ENCODE measurements at regions of chr1 and their contacts with region 1.

Region 1: DNA sequence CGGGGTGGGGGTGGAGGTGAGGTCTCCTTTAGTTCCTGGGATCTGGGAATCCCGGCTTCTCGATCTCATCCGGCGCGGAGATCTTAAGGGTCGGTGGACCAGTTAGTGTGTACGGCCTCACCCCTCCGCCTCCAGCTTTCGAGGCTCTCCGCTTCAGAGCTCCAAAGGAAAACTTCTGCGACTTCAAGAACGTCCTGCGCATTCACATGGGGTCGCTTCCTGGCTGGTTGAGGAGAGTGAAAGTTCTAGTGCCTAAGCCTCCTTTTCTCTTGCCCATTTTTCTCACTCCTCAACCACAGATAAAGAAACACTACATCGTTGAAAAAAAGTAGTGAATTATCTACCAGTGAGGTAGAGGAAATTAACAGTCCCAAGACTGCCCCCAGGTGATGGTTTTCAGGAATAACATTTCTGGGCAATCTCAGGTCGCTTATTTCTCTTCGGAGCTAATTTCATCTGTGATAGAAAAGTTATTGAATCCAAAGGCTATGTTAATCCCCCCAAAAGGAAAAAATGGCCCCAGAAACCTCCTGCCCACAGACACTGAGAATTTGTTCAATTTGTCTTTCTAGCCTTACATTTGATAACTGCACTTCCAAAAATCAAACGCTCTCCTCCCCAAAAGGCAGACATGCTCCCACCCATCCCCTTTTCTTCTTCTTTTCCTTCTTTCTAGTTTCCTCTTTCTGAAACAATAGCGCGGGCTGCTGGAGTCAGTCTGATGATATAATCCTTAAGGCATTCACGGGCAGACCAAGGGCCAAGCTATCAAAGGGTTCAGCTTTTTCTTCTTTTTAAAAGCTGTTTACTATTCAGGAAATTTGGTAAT is 20.6 kb upstream of the TBX15 start:
- DNase-seq: no peak
- ATAC-seq: peak; percentile 26
- H3K4me3 Mint-ChIP-seq: peak overlapping the region; percentile 13
- H3K27ac Mint-ChIP-seq: no peak overlapping the region
- H3K4me1 Mint-ChIP-seq: peaks cover 12% of the 10 kb centered on the region
- H3K27me3 Mint-ChIP-seq: peaks cover 70% of the 10 kb centered on the region

Region 2: DNA sequence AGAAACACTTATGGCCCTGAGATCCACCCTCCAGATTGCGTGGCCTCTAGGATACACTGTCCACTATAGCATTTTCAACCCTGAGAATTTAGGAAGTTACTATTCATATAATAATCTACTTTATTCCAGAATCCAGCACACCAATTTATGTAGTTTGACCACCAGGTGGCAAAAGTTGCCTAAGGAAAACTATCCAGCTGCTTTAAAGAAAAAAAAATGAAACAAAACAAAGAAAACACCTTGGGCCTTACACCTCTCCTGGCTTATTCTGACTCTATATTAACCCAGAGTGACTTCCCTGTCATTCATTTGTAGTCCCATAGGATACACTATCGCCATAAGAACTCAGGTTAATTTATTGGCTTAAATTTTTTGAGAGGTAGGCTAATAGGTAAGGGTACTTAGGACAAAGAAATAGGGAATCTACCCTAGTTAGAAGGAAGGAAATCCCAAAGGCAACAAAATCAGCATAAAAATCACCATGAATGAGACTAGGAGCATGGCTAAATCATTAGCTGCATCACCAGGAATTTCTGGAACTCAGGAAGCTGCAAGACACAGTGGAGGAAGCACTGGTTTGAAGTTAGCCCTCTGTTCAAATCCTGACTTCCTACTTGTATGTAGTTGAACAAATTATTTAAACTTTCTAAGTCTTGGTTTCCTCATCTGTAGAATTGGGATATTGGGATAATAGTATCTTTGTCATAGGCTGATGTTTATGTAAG is 931.2 kb before region 1 on chr1:
- CTCF ChIA-PET with region 1: no interaction called
- POLR2A ChIA-PET with region 1: no interaction called
- intact Hi-C with region 1: loop called in 1 of 2 experiments (anchors 2 kb)
- DNase-seq: no peak
- ATAC-seq: no peak
- H3K4me3 Mint-ChIP-seq: no peak overlapping the region
- H3K27ac Mint-ChIP-seq: no peak overlapping the region
- H3K4me1 Mint-ChIP-seq: peaks cover 4% of the 10 kb centered on the region
- H3K27me3 Mint-ChIP-seq: peaks cover 7% of the 10 kb centered on the region

Region 3: GRCh38 chr1:118151312-118151937 is 857.3 kb before region 1 on chr1:
- CTCF ChIA-PET with region 1: interaction called, 9 read pairs
- POLR2A ChIA-PET with region 1: no interaction called
- intact Hi-C with region 1: loop called (anchors 1 to 10 kb)
- DNase-seq: peak; percentile 68
- ATAC-seq: no peak
- H3K4me3 Mint-ChIP-seq: no peak overlapping the region
- H3K27ac Mint-ChIP-seq: no peak overlapping the region
- H3K4me1 Mint-ChIP-seq: no peaks in the 10 kb centered on the region
- H3K27me3 Mint-ChIP-seq: no peaks in the 10 kb centered on the region

Region 4: DNA sequence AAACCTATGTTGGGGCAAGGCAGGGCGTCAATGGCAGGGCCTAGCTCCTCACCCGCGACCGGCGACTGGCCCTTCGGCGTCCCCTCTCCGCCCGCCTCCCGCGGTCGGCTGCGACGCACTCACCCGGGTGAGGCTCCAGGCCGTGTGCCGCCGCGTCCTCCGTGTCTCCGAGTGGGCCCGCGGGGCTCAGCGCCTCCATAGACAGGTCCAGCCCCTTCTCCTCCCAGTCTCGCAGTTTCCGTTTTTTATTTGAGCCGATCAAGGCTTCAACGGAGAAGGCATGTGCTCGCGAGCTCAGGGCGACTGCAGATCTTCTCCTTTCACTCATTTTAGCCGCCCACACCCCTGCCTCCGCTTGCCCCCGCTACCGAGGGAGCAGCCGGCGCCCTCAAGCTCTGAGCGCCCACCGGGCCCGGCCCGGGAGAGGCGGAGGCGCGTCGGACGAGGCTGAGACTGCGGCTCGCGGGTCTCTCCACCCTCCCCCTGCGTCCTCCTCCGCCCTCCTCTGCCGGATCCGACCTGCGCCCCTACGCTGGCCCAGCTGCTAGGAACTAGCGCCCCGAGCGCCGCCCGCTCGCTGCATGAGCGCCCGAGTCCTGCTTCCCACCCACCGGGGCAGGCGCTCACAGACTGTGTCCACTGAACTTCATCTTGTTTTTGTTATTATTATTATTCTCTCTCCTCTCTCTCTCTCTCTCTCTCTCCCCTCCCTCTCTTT is 21.1 kb before region 1 on chr1:
- CTCF ChIA-PET with region 1: interaction called, 5 read pairs
- POLR2A ChIA-PET with region 1: no interaction called
- intact Hi-C with region 1: loop called (anchors 1 to 2 kb)
- DNase-seq: no peak
- ATAC-seq: peak; percentile 16
- H3K4me3 Mint-ChIP-seq: no peak overlapping the region
- H3K27ac Mint-ChIP-seq: no peak overlapping the region
- H3K4me1 Mint-ChIP-seq: peaks cover 26% of the 10 kb centered on the region
- H3K27me3 Mint-ChIP-seq: peaks cover 89% of the 10 kb centered on the region